Activated CD8-positive, alpha-beta T cell treated with anti-CD3 and anti-CD28 coated beads for 36 hours (primary cell): ENCODE measurements at regions of chr15 and their contacts with region 1.

Region 1: DNA sequence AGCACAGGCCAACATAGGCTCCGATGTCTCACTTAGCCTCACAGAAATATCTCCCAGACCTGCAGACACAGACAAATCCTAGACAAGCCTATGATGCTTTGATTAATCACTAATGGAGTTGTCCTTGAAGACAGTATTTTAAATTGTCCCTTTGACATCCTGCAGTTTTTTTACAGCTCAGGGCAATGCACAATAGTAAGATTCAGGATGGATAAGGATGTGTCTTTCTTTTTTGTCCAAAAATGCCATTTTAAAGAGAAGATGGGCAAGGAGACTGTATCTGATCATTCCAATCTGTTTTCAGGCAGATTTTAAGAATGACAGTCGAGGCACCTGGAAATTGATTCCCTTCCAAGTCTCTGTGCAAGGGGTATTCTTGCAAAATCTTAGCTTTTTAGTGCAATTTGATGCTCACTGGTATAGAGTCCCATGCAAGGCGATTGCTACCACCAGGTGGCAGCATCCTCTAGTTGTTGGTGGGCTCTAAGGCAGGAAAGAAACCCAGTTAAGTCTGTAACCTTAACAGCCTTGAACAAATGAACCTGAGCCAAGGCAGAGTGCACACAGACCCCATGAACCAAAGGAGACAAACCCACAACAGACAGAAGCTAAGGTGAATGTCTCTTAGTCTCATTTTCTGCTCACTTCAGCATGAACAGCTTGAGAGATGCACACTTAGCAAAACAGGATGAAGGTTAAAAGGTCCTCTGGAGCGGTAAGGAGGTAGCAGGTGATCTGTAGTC is 51.2 kb upstream of the MINAR1 start:
- DNase-seq: peak; percentile 89
- ATAC-seq: peak; percentile 83
- H3K4me3 Mint-ChIP-seq: no peak overlapping the region
- H3K27ac Mint-ChIP-seq: no peak overlapping the region
- H3K4me1 Mint-ChIP-seq: peaks cover 4% of the 10 kb centered on the region
- H3K27me3 Mint-ChIP-seq: no peaks in the 10 kb centered on the region
- CTCF ChIP-seq: peak; percentile 85

Region 2: GRCh38 chr15:79370716-79371115 is 10.2 kb before region 1 on chr15:
- CTCF ChIA-PET with region 1: interaction called, 55 read pairs
- POLR2A ChIA-PET with region 1: no interaction called
- intact Hi-C with region 1: no loop called
- DNase-seq: no peak
- ATAC-seq: no peak
- H3K4me3 Mint-ChIP-seq: no peak overlapping the region
- H3K27ac Mint-ChIP-seq: no peak overlapping the region
- H3K4me1 Mint-ChIP-seq: no peaks in the 10 kb centered on the region
- H3K27me3 Mint-ChIP-seq: no peaks in the 10 kb centered on the region
- CTCF ChIP-seq: no peak

Region 3: DNA sequence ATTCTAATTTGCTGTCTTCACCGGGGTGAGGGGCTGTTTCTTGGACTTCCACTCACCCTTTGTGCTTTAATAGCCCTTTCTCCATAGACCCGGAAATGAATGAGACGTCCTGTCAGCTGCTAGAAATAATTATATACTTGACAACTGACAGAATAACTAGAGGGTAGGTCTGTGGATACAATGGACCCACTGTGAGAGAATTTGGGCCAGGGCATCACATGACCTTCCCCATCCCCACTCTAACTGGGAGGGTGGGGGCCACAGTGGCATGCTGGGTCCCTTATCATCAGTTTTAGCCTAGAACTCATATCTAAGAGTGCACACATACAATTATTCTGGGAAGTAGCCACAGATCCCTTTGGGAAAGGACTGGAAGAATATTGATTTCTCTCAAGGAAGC is 25.3 kb after region 1 on chr15:
- CTCF ChIA-PET with region 1: interaction called, 11 read pairs
- POLR2A ChIA-PET with region 1: no interaction called
- intact Hi-C with region 1: no loop called
- DNase-seq: no peak
- ATAC-seq: no peak
- H3K4me3 Mint-ChIP-seq: no peak overlapping the region
- H3K27ac Mint-ChIP-seq: no peak overlapping the region
- H3K4me1 Mint-ChIP-seq: no peaks in the 10 kb centered on the region
- H3K27me3 Mint-ChIP-seq: no peaks in the 10 kb centered on the region
- CTCF ChIP-seq: no peak

Region 4: GRCh38 chr15:79596051-79596507 is 215.2 kb after region 1 on chr15:
- CTCF ChIA-PET with region 1: interaction called, 152 read pairs
- POLR2A ChIA-PET with region 1: no interaction called
- intact Hi-C with region 1: loop called (anchors 5 kb)
- DNase-seq: peak; percentile 78
- ATAC-seq: peak; percentile 100
- H3K4me3 Mint-ChIP-seq: no peak overlapping the region
- H3K27ac Mint-ChIP-seq: no peak overlapping the region
- H3K4me1 Mint-ChIP-seq: no peaks in the 10 kb centered on the region
- H3K27me3 Mint-ChIP-seq: peaks cover 24% of the 10 kb centered on the region
- CTCF ChIP-seq: peak; percentile 85